ENCODE measurements at regions of chr18 and their contacts with region 1.

Region 1: GRCh38 chr18:13036622-13037320 is 45.6 kb downstream of the CEP192 start:
- DNase-seq: no peak
- H3K4me3 ChIP-seq: no peak overlapping the region
- H3K27ac ChIP-seq: no peak overlapping the region
- H3K4me1 ChIP-seq: no peaks in the 10 kb centered on the region
- H3K27me3 ChIP-seq: no peaks in the 10 kb centered on the region
- CTCF ChIP-seq: no peak
- EP300 ChIP-seq: no peak
- POLR2A ChIP-seq: no peak

Region 2: DNA sequence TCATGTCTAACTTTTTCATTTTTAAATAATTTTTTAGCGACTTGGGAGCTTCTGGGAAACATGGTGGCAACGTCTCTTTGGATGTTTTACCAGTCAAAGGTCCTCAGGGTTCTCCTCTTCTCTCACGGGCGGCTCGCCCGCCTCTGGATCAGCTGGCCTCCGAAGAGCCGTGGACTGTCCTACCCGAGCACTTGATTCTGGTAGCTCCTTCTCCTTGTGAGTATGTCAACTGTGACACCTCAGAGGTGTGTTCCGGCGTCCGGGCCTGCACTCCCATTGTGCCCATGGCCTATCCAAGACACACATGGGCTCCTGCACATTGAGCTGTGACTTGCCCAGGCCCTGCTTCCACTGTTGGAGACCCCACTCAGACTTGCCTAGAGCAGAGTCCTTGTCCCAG is 58.7 kb after region 1 on chr18:
- in situ Hi-C with region 1: loop called in 1 of 4 experiments (anchors 10 kb)
- intact Hi-C with region 1: no loop called
- DNase-seq: no peak
- H3K4me3 ChIP-seq: no peak overlapping the region
- H3K27ac ChIP-seq: no peak overlapping the region
- H3K4me1 ChIP-seq: no peaks in the 10 kb centered on the region
- H3K27me3 ChIP-seq: no peaks in the 10 kb centered on the region
- CTCF ChIP-seq: no peak
- EP300 ChIP-seq: no peak
- POLR2A ChIP-seq: no peak

Region 3: GRCh38 chr18:13159579-13159978 is 122.8 kb after region 1 on chr18:
- in situ Hi-C with region 1: loop called in 1 of 4 experiments (anchors 25 kb)
- intact Hi-C with region 1: no loop called
- DNase-seq: no peak
- H3K4me3 ChIP-seq: no peak overlapping the region
- H3K27ac ChIP-seq: no peak overlapping the region
- H3K4me1 ChIP-seq: no peaks in the 10 kb centered on the region
- H3K27me3 ChIP-seq: no peaks in the 10 kb centered on the region
- CTCF ChIP-seq: peak; percentile 71 to 83 (median 78)
- EP300 ChIP-seq: no peak
- POLR2A ChIP-seq: no peak

Measured in transverse colon (tissue), 4 donors.